ENCODE measurements at regions of chr5 and their contacts with region 1.

Region 1: GRCh38 chr5:36151434-36152323 is at the starts of genes LMBRD2 and SKP2:
- DNase-seq: peak; percentile 98
- ATAC-seq: peak; percentile 94
- H3K4me3 ChIP-seq: peak within 1 kb of the TSS; percentile 79
- H3K27ac ChIP-seq: peak within 1 kb of the TSS; percentile 87
- H3K4me1 ChIP-seq: peaks cover 14% of the 10 kb centered on the region
- H3K27me3 ChIP-seq: no peaks in the 10 kb centered on the region
- CTCF ChIP-seq: no peak
- POLR2A ChIP-seq: peak; percentile 28; the same call in 1 of the 2 replicates
- RAD21 ChIP-seq: no peak
- total RNA-seq, gene LMBRD2: 5.2 and 11.4 TPM in 2 replicates
- total RNA-seq, gene SKP2: 72.5 and 92.1 TPM in 2 replicates

Region 2: GRCh38 chr5:34749431-34749873 is 1402.2 kb before region 1 on chr5:
- CTCF ChIA-PET with region 1: no interaction called
- POLR2A ChIA-PET with region 1: no interaction called
- dilution Hi-C with region 1: no loop called
- in situ Hi-C with region 1: no loop called
- intact Hi-C with region 1: no loop called
- DNase-seq: peak; percentile 89
- ATAC-seq: peak; percentile 77
- H3K4me3 ChIP-seq: no peak overlapping the region
- H3K27ac ChIP-seq: peak overlapping the region; percentile 36
- H3K4me1 ChIP-seq: peaks cover 14% of the 10 kb centered on the region
- H3K27me3 ChIP-seq: no peaks in the 10 kb centered on the region
- CTCF ChIP-seq: no peak
- POLR2A ChIP-seq: no peak
- RAD21 ChIP-seq: no peak

Region 3: GRCh38 chr5:35954175-35954574 is 197.5 kb before region 1 on chr5:
- CTCF ChIA-PET with region 1: no interaction called
- POLR2A ChIA-PET with region 1: no interaction called
- dilution Hi-C with region 1: no loop called
- in situ Hi-C with region 1: no loop called
- intact Hi-C with region 1: loop called (anchors 5 kb)
- DNase-seq: no peak
- ATAC-seq: no peak
- H3K4me3 ChIP-seq: no peak overlapping the region
- H3K27ac ChIP-seq: no peak overlapping the region
- H3K4me1 ChIP-seq: no peaks in the 10 kb centered on the region
- H3K27me3 ChIP-seq: peaks cover 7% of the 10 kb centered on the region
- CTCF ChIP-seq: no peak
- POLR2A ChIP-seq: no peak
- RAD21 ChIP-seq: no peak

Region 4: DNA sequence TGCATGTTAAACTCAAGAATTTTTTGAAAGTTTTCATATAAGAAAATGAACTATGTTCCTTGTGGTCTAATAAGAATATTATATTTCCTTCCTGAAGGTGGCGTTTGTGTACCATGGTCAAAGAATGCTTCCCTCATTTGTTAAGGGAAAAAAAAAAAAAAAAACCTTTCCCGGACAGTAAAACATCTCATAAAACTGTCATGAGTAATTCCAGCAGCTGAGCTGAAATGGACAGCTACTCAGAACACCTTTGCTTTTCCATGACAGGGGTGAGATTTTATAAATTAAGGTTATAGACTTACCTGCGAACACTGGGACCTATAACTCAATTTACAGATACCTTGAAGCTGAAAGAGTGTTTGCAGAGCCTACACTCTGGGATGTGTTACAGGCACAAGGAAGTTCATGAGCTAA is 263.2 kb after region 1 on chr5:
- CTCF ChIA-PET with region 1: no interaction called
- POLR2A ChIA-PET with region 1: no interaction called
- dilution Hi-C with region 1: no loop called
- in situ Hi-C with region 1: no loop called
- intact Hi-C with region 1: no loop called
- DNase-seq: peak; percentile 54
- ATAC-seq: peak; percentile 72
- H3K4me3 ChIP-seq: no peak overlapping the region
- H3K27ac ChIP-seq: no peak overlapping the region
- H3K4me1 ChIP-seq: no peaks in the 10 kb centered on the region
- H3K27me3 ChIP-seq: peaks cover 13% of the 10 kb centered on the region
- CTCF ChIP-seq: peak; percentile 67
- POLR2A ChIP-seq: no peak
- RAD21 ChIP-seq: peak; percentile 78

Region 5: DNA sequence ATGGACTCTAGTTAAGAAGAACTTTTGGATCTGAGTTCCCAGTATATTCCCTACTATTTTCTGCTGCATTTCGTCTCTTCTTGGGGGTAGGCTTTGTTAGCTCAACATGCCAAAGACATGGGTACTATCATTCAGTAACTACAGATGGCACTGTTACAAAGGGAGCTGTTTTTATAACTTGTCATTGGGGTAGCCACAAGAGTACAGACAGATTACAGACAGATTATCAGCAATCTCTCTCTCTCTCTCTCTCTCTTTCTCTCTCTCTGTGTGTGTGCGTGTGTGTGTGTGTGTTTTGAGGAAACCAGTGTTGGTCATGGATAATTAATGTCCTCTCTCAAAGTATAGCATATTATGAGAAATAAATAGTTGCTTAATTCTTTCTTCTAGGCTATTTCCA is 1343.5 kb after region 1 on chr5:
- CTCF ChIA-PET with region 1: no interaction called
- POLR2A ChIA-PET with region 1: no interaction called
- dilution Hi-C with region 1: no loop called
- in situ Hi-C with region 1: no loop called
- intact Hi-C with region 1: no loop called
- DNase-seq: peak; percentile 39
- ATAC-seq: peak; percentile 46
- H3K4me3 ChIP-seq: no peak overlapping the region
- H3K27ac ChIP-seq: no peak overlapping the region
- H3K4me1 ChIP-seq: peaks cover 4% of the 10 kb centered on the region; the same call in 1 of the 2 replicates
- H3K27me3 ChIP-seq: no peaks in the 10 kb centered on the region
- CTCF ChIP-seq: peak; percentile 32
- POLR2A ChIP-seq: no peak
- RAD21 ChIP-seq: peak; percentile 34; the same call in 1 of the 2 replicates